Gastrocnemius medialis (tissue), 4 donors: ENCODE measurements at regions of chr14 and their contacts with region 1.

Region 1: DNA sequence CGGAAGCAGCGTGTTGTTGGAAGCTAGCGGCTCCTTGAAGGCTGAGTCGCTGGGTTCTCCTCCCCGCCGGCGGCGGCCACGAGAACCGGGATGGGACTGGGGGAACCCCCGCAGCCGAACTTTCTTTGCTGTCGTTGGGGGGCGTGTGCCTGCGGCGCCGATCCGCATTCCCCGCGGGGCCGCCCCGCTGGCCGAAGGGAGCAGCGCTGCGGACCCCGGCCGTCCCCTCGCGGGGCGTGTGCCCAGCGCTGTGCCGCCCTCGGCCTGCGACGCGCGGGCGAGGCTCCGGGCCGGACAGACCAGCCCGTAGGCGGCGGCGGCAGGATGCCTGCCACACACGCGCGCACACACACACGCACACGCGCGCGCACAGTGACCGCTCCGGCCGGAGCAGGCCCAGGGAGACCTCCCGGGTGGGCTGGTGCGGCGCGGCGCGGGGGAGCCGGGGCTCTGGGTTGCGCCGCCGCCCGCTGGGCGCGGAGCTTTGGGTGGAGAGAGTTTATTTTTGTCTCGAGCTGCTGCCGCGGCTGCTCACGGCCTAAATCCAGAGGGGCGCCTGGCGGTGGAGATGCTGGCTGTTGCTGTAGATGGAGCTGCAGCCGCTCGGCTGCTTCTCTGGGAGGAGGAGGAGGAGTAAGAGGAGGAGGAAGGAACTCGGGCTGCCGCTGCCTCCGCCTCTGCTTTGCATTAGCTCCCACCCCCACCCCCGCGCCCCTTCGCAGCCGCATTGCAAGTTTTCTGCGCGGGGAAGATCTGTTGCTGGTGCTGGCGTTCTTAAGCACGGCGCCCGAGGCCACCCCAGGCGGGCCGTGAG is at the start of gene SAMD4A:
- DNase-seq: peak; percentile 82 to 85
- ATAC-seq: peak; percentile 38 to 53
- H3K4me3 ChIP-seq: peak within 1 kb of the TSS; percentile 67 to 89 (median 81)
- H3K27ac ChIP-seq: peak within 1 kb of the TSS; percentile 97 to 100 (median 99)
- H3K4me1 ChIP-seq: peaks cover 37 to 45% of the 10 kb centered on the region in 2 donors
- H3K27me3 ChIP-seq: no peaks in the 10 kb centered on the region
- CTCF ChIP-seq: peak; percentile 42 to 54 (median 51)
- POLR2A ChIP-seq: peak; percentile 79 to 83
- total RNA-seq, gene SAMD4A: 26.4 to 48.0 (median 42.2) TPM

Region 2: GRCh38 chr14:54387328-54387727 is 179.3 kb before region 1 on chr14:
- in situ Hi-C with region 1: no loop called
- intact Hi-C with region 1: no loop called
- DNase-seq: no peak
- ATAC-seq: no peak
- H3K4me3 ChIP-seq: no peak overlapping the region
- H3K27ac ChIP-seq: no peak overlapping the region
- H3K4me1 ChIP-seq: no peaks in the 10 kb centered on the region
- H3K27me3 ChIP-seq: no peaks in the 10 kb centered on the region
- CTCF ChIP-seq: no peak
- POLR2A ChIP-seq: no peak

Region 3: GRCh38 chr14:54606178-54606577 is 39.6 kb after region 1 on chr14:
- in situ Hi-C with region 1: no loop called
- intact Hi-C with region 1: no loop called
- DNase-seq: peak in 1 of 2 donors; percentile 51
- ATAC-seq: peak; percentile 17 to 56
- H3K4me3 ChIP-seq: no peak overlapping the region
- H3K27ac ChIP-seq: peak overlapping the region; percentile 60 to 83 (median 78)
- H3K4me1 ChIP-seq: peaks cover 32 to 43% of the 10 kb centered on the region in 2 donors
- H3K27me3 ChIP-seq: no peaks in the 10 kb centered on the region
- CTCF ChIP-seq: no peak
- POLR2A ChIP-seq: no peak

Region 4: DNA sequence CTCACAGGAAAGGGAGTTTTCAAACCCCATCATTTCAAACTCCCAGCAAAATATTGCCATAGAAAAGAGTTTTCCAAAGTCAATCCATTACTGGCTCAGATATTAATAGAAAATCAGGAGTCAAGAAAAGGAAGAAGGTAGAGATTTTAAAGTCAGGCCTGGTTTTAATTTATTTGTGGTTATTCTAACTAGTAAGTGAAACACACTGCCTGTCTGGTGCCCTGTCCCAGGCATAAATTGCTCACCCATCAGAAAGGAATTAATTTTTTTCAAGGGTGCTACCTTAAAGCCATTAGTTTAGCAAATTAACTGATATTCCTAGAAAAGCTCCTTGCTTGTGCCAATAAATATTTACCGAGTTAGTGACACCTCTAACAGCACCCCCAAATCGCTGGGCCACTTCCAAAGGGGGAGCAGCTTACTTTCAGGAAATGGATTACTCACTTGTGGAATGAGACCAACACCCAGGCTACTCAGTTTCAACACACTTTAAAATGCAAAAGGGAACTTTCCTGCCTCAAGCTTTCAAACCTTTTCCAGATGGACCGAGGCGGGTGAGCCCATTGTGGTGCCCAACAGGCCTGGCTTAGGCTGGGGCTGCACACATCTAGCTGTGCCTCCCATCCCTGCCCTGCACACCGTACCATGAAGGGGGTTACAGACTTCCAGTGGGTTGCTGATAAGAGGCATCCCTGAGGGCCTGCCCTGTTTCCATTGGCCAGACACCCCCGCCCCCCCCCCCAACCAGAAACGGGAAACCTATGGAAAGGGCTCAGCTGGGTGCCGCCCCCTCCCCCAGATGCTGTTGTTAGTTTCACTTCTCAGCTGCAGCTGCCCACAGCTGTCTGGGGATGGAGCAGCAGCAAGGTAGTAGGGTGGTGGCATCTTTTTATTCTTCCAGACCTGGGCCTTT is 117.5 kb after region 1 on chr14:
- in situ Hi-C with region 1: loop called in 1 of 4 experiments (anchors 10 kb)
- intact Hi-C with region 1: loop called (anchors 1 kb)
- DNase-seq: peak in 1 of 2 donors; percentile 50
- ATAC-seq: no peak
- H3K4me3 ChIP-seq: no peak overlapping the region
- H3K27ac ChIP-seq: peak overlapping the region; percentile 86 to 99 (median 92)
- H3K4me1 ChIP-seq: peaks cover 56 to 64% of the 10 kb centered on the region in 2 donors
- H3K27me3 ChIP-seq: no peaks in the 10 kb centered on the region
- CTCF ChIP-seq: no peak
- POLR2A ChIP-seq: no peak

Region 5: GRCh38 chr14:54691525-54692283 is 125.1 kb after region 1 on chr14:
- in situ Hi-C with region 1: loop called in 3 of 4 experiments (anchors 5 to 10 kb)
- intact Hi-C with region 1: loop called (anchors 1 kb)
- DNase-seq: peak; percentile 63 to 84
- ATAC-seq: peak; percentile 53 to 71
- H3K4me3 ChIP-seq: no peak overlapping the region
- H3K27ac ChIP-seq: peak overlapping the region; percentile 86 to 99 (median 92)
- H3K4me1 ChIP-seq: peaks cover 62 to 68% of the 10 kb centered on the region in 2 donors
- H3K27me3 ChIP-seq: no peaks in the 10 kb centered on the region
- CTCF ChIP-seq: peak; percentile 82 to 92 (median 89)
- POLR2A ChIP-seq: no peak

Region 6: GRCh38 chr14:54722781-54723432 is 156.3 kb after region 1 on chr14:
- in situ Hi-C with region 1: no loop called
- intact Hi-C with region 1: loop called (anchors 10 kb)
- DNase-seq: no peak
- ATAC-seq: peak in 1 of 2 donors; percentile 77
- H3K4me3 ChIP-seq: no peak overlapping the region
- H3K27ac ChIP-seq: peak overlapping the region; percentile 19 to 37 (median 34)
- H3K4me1 ChIP-seq: peaks cover 31 to 56% of the 10 kb centered on the region in 2 donors
- H3K27me3 ChIP-seq: no peaks in the 10 kb centered on the region
- CTCF ChIP-seq: peak in 4 of 5 experiments; percentile 27 to 61 (median 36)
- POLR2A ChIP-seq: no peak

Region 7: GRCh38 chr14:54762296-54762695 is 195.7 kb after region 1 on chr14:
- in situ Hi-C with region 1: no loop called
- intact Hi-C with region 1: no loop called
- DNase-seq: no peak
- ATAC-seq: no peak
- H3K4me3 ChIP-seq: no peak overlapping the region
- H3K27ac ChIP-seq: peak overlapping the region in 3 of 4 donors; percentile 21 to 56 (median 37)
- H3K4me1 ChIP-seq: peaks cover 13 to 17% of the 10 kb centered on the region in 2 donors
- H3K27me3 ChIP-seq: no peaks in the 10 kb centered on the region
- CTCF ChIP-seq: no peak
- POLR2A ChIP-seq: no peak

Region 8: GRCh38 chr14:54782751-54783679 is 216.4 kb after region 1 on chr14:
- in situ Hi-C with region 1: loop called in 3 of 4 experiments (anchors 5 to 10 kb)
- intact Hi-C with region 1: loop called (anchors 2 kb)
- DNase-seq: no peak
- ATAC-seq: no peak
- H3K4me3 ChIP-seq: no peak overlapping the region
- H3K27ac ChIP-seq: peak overlapping the region; percentile 98 to 100 (median 99)
- H3K4me1 ChIP-seq: peaks cover 50% of the 10 kb centered on the region in 2 donors
- H3K27me3 ChIP-seq: no peaks in the 10 kb centered on the region
- CTCF ChIP-seq: no peak
- POLR2A ChIP-seq: no peak

Region 9: DNA sequence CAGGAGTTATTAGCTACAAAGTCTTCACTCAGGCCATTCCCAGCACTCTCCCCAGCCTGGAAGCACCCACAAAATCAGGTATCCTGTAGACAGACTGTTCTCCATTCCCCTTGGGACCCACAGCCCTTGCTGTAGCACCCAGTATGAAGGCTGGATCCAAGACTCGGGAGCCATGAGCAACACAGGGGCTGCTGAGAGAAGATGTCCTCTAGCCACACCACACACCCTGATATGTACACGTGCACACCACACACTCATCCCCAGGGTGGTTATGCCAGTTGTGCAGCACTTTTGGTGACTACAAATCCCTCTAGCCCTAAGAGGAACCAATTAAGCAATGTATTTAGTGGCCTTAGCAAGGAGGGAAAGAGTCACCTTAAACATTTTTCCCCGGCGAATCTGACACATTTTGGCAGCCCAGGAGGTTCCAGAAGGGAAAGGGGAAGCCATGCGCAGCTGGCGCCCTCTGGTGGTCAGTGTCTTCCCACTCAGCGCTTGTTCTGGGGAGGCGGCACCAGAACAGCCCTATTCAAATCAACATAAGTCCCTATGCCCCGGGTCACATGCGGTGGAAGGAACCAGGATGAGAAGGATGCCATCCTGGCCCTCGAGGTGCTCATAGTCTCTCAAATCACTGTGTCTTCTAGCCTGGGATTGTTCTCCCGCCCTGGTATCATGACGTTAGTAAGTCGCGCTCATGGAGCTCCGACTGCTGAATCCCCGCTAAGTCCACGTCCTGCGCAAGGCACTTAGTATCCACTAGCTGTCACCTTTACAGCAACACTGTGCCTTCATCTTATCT is 239.1 kb after region 1 on chr14:
- in situ Hi-C with region 1: no loop called
- intact Hi-C with region 1: loop called (anchors 1 kb)
- DNase-seq: peak; percentile 59 to 79
- ATAC-seq: peak; percentile 92
- H3K4me3 ChIP-seq: peak overlapping the region in 1 of 4 donors; percentile 17
- H3K27ac ChIP-seq: no peak overlapping the region
- H3K4me1 ChIP-seq: peaks cover 0 to 5% of the 10 kb centered on the region in 2 donors
- H3K27me3 ChIP-seq: no peaks in the 10 kb centered on the region
- CTCF ChIP-seq: peak; percentile 89 to 97 (median 92)
- POLR2A ChIP-seq: no peak

Region 10: DNA sequence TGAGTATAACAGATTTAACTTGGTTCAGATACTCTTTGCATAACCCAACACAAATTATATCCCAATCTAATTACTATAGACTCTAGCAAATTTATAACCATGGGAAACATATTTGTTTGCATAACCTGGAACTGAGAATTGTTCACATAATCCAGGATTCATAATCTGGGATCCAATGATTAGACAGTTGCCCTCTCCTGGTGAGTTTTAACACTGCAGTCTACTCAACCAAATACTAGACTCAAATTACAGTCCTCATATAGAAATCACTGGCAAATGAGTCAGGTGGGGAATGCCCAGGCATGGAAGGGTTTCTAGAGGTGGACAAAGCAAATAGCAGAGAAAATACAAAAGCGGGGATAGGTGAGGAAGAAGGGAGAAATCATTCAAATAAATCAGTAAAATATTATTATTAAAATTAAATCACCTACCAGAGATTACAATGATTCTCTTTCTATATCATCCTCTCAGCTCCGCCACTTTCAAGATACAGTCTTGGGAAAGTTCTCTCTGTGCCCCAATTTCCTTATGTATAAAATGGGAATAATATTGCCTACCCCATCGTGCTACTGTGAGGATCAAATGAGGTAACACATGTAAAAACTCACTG is 326.6 kb after region 1 on chr14:
- in situ Hi-C with region 1: no loop called
- intact Hi-C with region 1: loop called (anchors 10 kb)
- DNase-seq: no peak
- ATAC-seq: peak; percentile 42 to 58
- H3K4me3 ChIP-seq: no peak overlapping the region
- H3K27ac ChIP-seq: no peak overlapping the region
- H3K4me1 ChIP-seq: no peaks in the 10 kb centered on the region
- H3K27me3 ChIP-seq: no peaks in the 10 kb centered on the region
- CTCF ChIP-seq: peak; percentile 44 to 65 (median 54)
- POLR2A ChIP-seq: no peak